Psoas muscle (tissue), 8 donors: ENCODE measurements at regions of chr4 and their contacts with region 1.

Region 1: GRCh38 chr4:3531879-3532713 is at the start of gene LRPAP1:
- DNase-seq: peak; percentile 92 to 96
- ATAC-seq: peak; percentile 93 to 96 (median 95)
- H3K4me3 ChIP-seq: peak within 1 kb of the TSS; percentile 91
- H3K27ac ChIP-seq: peak within 1 kb of the TSS; percentile 80
- H3K4me1 ChIP-seq: peaks cover 19% of the 10 kb centered on the region
- H3K27me3 ChIP-seq: no peaks in the 10 kb centered on the region
- CTCF ChIP-seq: no peak
- total RNA-seq, gene LRPAP1: 73.7 to 123 (median 91.4) TPM

Region 2: DNA sequence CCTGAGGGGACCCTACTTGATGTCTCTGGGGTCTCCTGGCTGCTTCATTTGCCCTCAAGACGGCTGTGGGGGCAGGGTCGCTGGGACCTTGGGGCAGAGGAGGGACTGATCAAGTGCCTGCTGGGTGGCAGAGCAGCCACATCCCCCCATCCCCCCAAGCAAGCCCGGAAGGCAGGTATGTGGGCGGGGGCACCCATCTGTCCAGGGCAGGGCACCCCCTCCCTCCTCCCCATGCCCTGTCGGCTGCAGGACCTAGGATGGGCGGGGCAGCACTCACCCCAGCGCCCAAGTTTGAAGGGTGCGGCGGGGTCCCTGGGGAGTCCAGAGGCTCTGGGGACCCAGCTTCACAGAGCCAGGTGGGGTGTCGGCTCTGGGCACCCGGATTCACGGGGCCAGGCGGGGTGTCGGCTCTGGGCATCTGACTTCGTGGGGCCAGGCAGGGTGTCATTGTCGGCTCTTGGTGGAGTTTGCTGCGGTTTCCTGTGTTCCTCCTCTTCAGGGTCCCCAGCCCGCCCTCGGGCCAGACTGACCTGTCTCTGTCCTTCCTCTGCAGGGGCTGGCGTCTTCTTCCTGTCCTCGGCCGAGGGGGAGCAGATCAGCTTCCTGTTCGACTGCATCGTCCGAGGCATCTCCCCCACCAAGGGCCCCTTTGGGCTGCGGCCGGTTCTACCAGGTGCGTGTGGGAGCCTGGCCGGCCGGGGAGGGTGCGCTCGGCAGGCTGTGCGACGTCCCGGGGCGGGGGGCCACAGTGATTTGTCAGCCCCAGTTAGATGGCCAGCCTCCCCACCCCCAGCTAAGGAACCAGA is 46.9 kb before region 1 on chr4:
- intact Hi-C with region 1: loop called in 1 of 2 experiments (anchors 5 kb)
- DNase-seq: no peak
- ATAC-seq: no peak
- H3K4me3 ChIP-seq: peak overlapping the region; percentile 13
- H3K27ac ChIP-seq: peak overlapping the region; percentile 99
- H3K4me1 ChIP-seq: peaks cover 48% of the 10 kb centered on the region
- H3K27me3 ChIP-seq: no peaks in the 10 kb centered on the region
- CTCF ChIP-seq: no peak

Region 3: GRCh38 chr4:3871181-3871871 is 339.2 kb after region 1 on chr4:
- intact Hi-C with region 1: no loop called
- DNase-seq: peak in 1 of 2 donors; percentile 54
- ATAC-seq: no peak
- H3K4me3 ChIP-seq: no peak overlapping the region
- H3K27ac ChIP-seq: no peak overlapping the region
- H3K4me1 ChIP-seq: no peaks in the 10 kb centered on the region
- H3K27me3 ChIP-seq: peaks cover 0 to 79% (median 33%) of the 10 kb centered on the region in 3 donors
- CTCF ChIP-seq: no peak

Region 4: GRCh38 chr4:3945511-3946290 is 413.6 kb after region 1 on chr4:
- intact Hi-C with region 1: loop called in 1 of 2 experiments (anchors 10 kb)
- DNase-seq: no peak
- ATAC-seq: no peak
- H3K4me3 ChIP-seq: no peak overlapping the region
- H3K27ac ChIP-seq: no peak overlapping the region
- H3K4me1 ChIP-seq: no peaks in the 10 kb centered on the region
- H3K27me3 ChIP-seq: peaks cover 0 to 15% (median 10%) of the 10 kb centered on the region in 3 donors
- CTCF ChIP-seq: no peak